ENCODE measurements at regions of chr21 and their contacts with region 1.

Region 1: DNA sequence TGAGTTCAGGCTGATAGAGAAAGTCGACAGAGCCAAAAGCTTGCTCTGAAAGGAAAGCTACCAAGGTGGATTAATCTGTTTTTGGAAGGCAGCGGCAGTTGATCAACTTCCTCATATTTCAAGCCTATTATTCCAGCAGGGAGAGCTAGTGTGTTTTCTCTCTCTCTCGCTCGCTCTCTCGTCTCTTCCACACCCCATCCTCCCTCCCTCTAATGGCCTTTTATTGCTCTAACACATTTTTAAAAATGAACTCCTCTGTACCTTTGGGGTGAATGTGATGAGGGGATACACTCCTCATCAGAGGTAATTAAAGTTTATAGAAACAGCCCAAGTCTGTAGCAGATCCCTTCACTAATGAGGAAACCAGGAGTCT is 126.4 kb downstream of the CLIC6 start:
- DNase-seq: peak; percentile 50 to 68

Region 2: GRCh38 chr21:34669149-34669879 is 125.8 kb before region 1 on chr21:
- in situ Hi-C with region 1: loop called (anchors 25 kb)
- DNase-seq: peak; percentile 46

Region 3: DNA sequence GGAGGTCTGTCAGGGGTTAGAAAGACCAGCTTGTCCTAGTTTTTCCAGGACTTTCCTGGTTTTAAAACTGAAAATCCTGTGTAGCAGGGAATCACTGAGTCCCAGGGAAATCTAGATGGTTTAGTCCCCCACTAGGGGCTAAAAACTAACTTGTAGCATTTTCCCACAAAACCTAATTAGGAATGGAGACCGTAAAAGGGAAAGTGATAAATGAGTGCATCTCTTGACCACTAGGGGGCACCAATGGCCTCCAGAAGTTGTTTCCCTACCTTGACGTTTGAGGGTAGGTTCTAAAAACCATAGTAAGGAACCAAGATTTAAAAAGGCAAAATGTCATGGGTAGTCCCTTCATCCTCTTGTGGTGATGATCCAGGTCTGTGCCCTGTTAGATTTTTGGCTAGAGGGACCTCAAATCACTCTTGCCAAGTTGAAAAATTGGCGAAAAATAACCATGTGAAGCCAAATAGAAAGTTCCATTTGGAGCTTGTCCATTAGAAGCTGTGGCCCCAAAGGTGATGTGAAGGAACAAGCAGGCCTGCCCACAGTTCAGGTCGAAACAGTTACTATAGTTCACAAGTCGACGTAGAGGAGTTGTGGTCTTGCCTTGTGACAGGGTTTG is 101.9 kb before region 1 on chr21:
- in situ Hi-C with region 1: no loop called
- DNase-seq: peak; percentile 48 to 87

Region 4: GRCh38 chr21:34900376-34900775 is 105.2 kb after region 1 on chr21:
- in situ Hi-C with region 1: no loop called
- DNase-seq: no peak

Region 5: GRCh38 chr21:34916446-34916845 is 121.3 kb after region 1 on chr21:
- in situ Hi-C with region 1: no loop called
- DNase-seq: no peak